Activated T-helper 1 cell treated with anti-CD3 and anti-CD28 coated beads, Interleukin-12 subunit alpha, Interleukin-12 subunit beta, Interleukin-2, Interleukin-4 antibody, amounts not matched to agents 30 ng/mL and 10 ng/mL and 1 ng/mL, durations not matched to agents 14 hours and 24 hours and 36 hours (primary cell): ENCODE measurements at regions of chr6 and their contacts with region 1.

Region 1: GRCh38 chr6:75498862-75499261 is 5.3 kb upstream of the FILIP1 start:
- DNase-seq: no peak
- H3K4me3 Mint-ChIP-seq: no peak overlapping the region
- H3K27ac Mint-ChIP-seq: no peak overlapping the region
- H3K4me1 Mint-ChIP-seq: peaks cover 29% of the 10 kb centered on the region
- H3K27me3 Mint-ChIP-seq: peaks cover 26% of the 10 kb centered on the region

Region 2: GRCh38 chr6:75424618-75425548 is 74.0 kb before region 1 on chr6:
- intact Hi-C with region 1: loop called (anchors 5 kb)
- DNase-seq: no peak
- H3K4me3 Mint-ChIP-seq: no peak overlapping the region
- H3K27ac Mint-ChIP-seq: no peak overlapping the region
- H3K4me1 Mint-ChIP-seq: peaks cover 12% of the 10 kb centered on the region
- H3K27me3 Mint-ChIP-seq: peaks cover 3% of the 10 kb centered on the region

Region 3: GRCh38 chr6:75830959-75831885 is 332.4 kb after region 1 on chr6:
- intact Hi-C with region 1: loop called (anchors 5 kb)
- DNase-seq: peak; percentile 4
- H3K4me3 Mint-ChIP-seq: no peak overlapping the region
- H3K27ac Mint-ChIP-seq: no peak overlapping the region
- H3K4me1 Mint-ChIP-seq: peaks cover 9% of the 10 kb centered on the region
- H3K27me3 Mint-ChIP-seq: peaks cover 3% of the 10 kb centered on the region